ENCODE measurements at regions of chr9 and their contacts with region 1.

Region 1: DNA sequence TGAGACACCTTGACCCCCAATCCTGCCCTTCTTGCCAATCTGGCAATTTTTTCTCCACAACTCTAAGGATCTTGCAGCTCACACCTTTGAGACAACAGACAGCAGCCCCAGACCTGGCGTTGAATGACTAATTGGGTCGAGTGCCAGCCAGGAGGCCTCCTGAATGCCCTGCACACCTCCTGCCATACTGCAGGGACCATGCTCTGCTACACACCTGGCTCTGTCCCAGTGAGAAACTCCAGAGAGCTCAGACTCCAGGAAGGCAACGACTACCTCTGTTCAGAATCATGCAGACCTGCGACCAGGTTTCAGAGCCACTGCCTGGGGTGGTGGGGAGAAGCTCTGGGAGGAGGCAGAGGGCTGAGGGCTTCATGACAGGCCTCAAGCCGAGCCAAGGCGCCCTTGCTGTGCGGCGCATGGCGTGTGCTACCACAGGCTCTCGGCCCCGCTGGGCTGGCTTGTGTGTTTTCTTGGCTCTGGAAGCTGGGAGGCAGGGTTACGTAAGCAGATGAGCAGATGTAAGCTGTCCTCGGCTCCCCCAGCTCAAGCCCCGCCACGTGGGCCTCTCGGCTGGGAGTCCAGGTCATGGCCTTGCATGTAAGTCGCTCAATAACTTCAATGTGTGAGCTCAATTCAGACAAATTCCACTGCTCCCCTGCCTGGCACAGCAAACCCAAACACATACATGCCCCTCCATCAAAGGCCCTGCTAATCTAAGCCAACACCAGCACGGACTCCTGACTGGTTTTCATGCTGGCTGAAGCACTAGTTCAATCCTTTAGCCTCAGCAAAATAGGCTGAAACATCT is 27.5 kb downstream of the B4GALT1 start:
- DNase-seq: no peak
- ATAC-seq: no peak
- H3K4me3 ChIP-seq: no peak overlapping the region
- H3K4me3 Mint-ChIP-seq: peak overlapping the region; percentile 58
- H3K27ac ChIP-seq: peak overlapping the region in 1 of 2 donors; percentile 67
- H3K27ac Mint-ChIP-seq: peak overlapping the region; percentile 67
- H3K4me1 ChIP-seq: peaks cover 94% of the 10 kb centered on the region
- H3K4me1 Mint-ChIP-seq: peaks cover 77% of the 10 kb centered on the region
- H3K27me3 ChIP-seq: no peaks in the 10 kb centered on the region
- H3K27me3 Mint-ChIP-seq: no peaks in the 10 kb centered on the region
- CTCF ChIP-seq: no peak

Region 2: GRCh38 chr9:33159760-33160127 is 20.1 kb after region 1 on chr9:
- CTCF ChIA-PET with region 1: no interaction called
- POLR2A ChIA-PET with region 1: interaction called, 10 read pairs
- intact Hi-C with region 1: loop called (anchors 2 kb)
- DNase-seq: peak in 9 of 14 experiments; percentile 34 to 86 (median 56)
- ATAC-seq: peak; percentile 67
- H3K4me3 ChIP-seq: peak overlapping the region; percentile 29
- H3K4me3 Mint-ChIP-seq: peak overlapping the region; percentile 78
- H3K27ac ChIP-seq: peak overlapping the region; percentile 76 to 94
- H3K27ac Mint-ChIP-seq: peak overlapping the region; percentile 97
- H3K4me1 ChIP-seq: peaks cover 92% of the 10 kb centered on the region
- H3K4me1 Mint-ChIP-seq: peaks cover 84% of the 10 kb centered on the region
- H3K27me3 ChIP-seq: no peaks in the 10 kb centered on the region
- H3K27me3 Mint-ChIP-seq: no peaks in the 10 kb centered on the region
- CTCF ChIP-seq: no peak

Region 3: GRCh38 chr9:33350310-33350709 is 210.7 kb after region 1 on chr9:
- CTCF ChIA-PET with region 1: no interaction called
- POLR2A ChIA-PET with region 1: no interaction called
- intact Hi-C with region 1: no loop called
- DNase-seq: no peak
- ATAC-seq: no peak
- H3K4me3 ChIP-seq: no peak overlapping the region
- H3K4me3 Mint-ChIP-seq: no peak overlapping the region
- H3K27ac ChIP-seq: no peak overlapping the region
- H3K27ac Mint-ChIP-seq: peak overlapping the region; percentile 44
- H3K4me1 ChIP-seq: no peaks in the 10 kb centered on the region
- H3K4me1 Mint-ChIP-seq: peaks cover 25% of the 10 kb centered on the region
- H3K27me3 ChIP-seq: no peaks in the 10 kb centered on the region
- H3K27me3 Mint-ChIP-seq: no peaks in the 10 kb centered on the region
- CTCF ChIP-seq: no peak

Region 4: GRCh38 chr9:33843312-33843961 is 703.8 kb after region 1 on chr9:
- CTCF ChIA-PET with region 1: no interaction called
- POLR2A ChIA-PET with region 1: no interaction called
- intact Hi-C with region 1: no loop called
- DNase-seq: peak in 1 of 14 experiments; percentile 15
- ATAC-seq: no peak
- H3K4me3 ChIP-seq: no peak overlapping the region
- H3K4me3 Mint-ChIP-seq: no peak overlapping the region
- H3K27ac ChIP-seq: no peak overlapping the region
- H3K27ac Mint-ChIP-seq: peak overlapping the region; percentile 59
- H3K4me1 ChIP-seq: peaks cover 20% of the 10 kb centered on the region
- H3K4me1 Mint-ChIP-seq: peaks cover 82% of the 10 kb centered on the region
- H3K27me3 ChIP-seq: no peaks in the 10 kb centered on the region
- H3K27me3 Mint-ChIP-seq: no peaks in the 10 kb centered on the region
- CTCF ChIP-seq: no peak

Measured in CD4-positive, alpha-beta T cell (primary cell).